Adrenal gland (tissue), 19 donors: ENCODE measurements at regions of chr3 and their contacts with region 1.

Region 1: GRCh38 chr3:72949016-72949415 is 47.6 kb upstream of the PPP4R2 start:
- DNase-seq: no peak
- H3K4me3 ChIP-seq: no peak overlapping the region
- H3K27ac ChIP-seq: no peak overlapping the region
- H3K4me1 ChIP-seq: no peaks in the 10 kb centered on the region
- H3K27me3 ChIP-seq: no peaks in the 10 kb centered on the region
- CTCF ChIP-seq: no peak
- POLR2A ChIP-seq: no peak

Region 2: DNA sequence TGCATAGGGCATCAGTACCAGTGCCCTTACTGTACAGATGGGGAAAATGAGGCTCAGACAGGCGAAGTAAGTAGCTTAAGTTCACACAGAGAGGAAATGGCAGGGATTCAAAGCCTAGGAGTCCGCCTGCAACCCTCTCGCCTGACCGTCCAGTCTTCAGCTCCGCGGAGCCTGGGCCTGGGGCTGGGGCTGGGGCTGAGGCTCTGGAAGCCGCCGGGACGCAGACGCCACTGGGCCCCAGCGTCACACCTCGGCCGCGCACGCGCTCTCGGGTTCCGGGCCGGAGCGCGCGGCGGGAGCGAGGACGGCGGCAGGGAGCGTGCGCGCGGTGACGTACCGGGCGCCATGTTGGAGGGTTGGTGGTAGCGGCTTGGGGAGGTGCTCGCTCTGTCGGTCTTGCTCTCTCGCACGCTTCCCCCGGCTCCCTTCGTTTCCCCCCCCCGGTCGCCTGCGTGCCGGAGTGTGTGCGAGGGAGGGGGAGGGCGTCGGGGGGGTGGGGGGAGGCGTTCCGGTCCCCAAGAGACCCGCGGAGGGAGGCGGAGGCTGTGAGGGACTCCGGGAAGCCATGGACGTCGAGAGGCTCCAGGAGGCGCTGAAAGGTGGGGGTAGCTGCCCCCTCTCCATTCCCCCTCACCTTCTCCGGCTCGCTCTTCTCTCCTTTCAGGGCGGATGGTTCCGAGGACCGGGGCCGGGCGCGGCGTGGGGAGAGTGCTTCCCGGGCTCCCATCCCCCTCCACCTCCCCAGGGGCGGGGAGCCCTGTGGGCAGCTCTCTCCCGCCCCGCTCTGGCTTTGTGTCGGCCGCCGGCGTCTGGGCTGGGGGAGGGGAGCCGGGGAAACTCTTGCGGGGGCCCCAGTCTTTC is 47.7 kb after region 1 on chr3 and contains the start of gene PPP4R2:
- intact Hi-C with region 1: loop called in 1 of 2 experiments (anchors 10 kb)
- DNase-seq: peak; percentile 86 to 90 (median 88)
- H3K4me3 ChIP-seq: peak within 1 kb of the TSS; percentile 2 to 96 (median 86)
- H3K27ac ChIP-seq: peak within 1 kb of the TSS; percentile 78 to 100 (median 98)
- H3K4me1 ChIP-seq: peaks cover 33 to 39% of the 10 kb centered on the region in 2 donors
- H3K27me3 ChIP-seq: no peaks in the 10 kb centered on the region
- CTCF ChIP-seq: no peak
- POLR2A ChIP-seq: peak; percentile 78 to 89
- total RNA-seq, gene PPP4R2: 31.7 to 90.1 (median 71.0) TPM

Region 3: DNA sequence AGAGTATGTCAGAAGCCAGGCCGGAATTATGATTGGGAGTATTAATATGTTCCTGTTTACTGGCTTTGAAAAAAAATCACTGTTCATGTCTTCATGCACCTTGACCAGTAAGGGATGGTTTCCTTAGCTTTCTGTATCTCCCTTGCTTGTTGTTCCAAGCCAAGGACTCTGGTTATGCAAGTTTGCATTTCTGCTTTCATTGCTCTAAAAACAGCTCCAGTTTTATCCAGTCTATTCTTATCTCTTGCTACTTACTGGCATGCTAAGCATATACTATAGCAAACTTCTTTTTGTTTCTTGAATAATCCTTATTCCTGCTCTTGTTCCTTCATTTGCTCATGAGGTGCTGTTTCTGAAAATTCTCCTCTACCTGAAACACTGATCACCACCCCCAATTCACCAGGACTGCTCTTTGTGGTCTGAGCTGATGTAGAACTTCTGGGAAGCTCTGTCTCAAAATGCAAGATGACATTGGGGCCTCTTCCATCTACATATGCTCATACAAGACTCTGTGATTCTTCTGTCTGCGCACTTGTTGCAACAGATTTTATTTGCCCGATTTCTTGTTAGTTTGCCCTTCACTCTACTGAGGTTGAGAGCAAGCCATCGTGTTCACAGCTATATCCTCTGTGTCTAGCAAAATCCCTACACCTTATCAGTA is 285.5 kb after region 1 on chr3:
- intact Hi-C with region 1: no loop called
- DNase-seq: no peak
- H3K4me3 ChIP-seq: no peak overlapping the region
- H3K27ac ChIP-seq: no peak overlapping the region
- H3K4me1 ChIP-seq: peaks cover 0 to 5% of the 10 kb centered on the region in 2 donors
- H3K27me3 ChIP-seq: no peaks in the 10 kb centered on the region
- CTCF ChIP-seq: no peak
- POLR2A ChIP-seq: no peak